Activated CD8-positive, alpha-beta T cell treated with anti-CD3 and anti-CD28 coated beads for 36 hours (primary cell): ENCODE measurements at regions of chr5 and their contacts with region 1.

Region 1: DNA sequence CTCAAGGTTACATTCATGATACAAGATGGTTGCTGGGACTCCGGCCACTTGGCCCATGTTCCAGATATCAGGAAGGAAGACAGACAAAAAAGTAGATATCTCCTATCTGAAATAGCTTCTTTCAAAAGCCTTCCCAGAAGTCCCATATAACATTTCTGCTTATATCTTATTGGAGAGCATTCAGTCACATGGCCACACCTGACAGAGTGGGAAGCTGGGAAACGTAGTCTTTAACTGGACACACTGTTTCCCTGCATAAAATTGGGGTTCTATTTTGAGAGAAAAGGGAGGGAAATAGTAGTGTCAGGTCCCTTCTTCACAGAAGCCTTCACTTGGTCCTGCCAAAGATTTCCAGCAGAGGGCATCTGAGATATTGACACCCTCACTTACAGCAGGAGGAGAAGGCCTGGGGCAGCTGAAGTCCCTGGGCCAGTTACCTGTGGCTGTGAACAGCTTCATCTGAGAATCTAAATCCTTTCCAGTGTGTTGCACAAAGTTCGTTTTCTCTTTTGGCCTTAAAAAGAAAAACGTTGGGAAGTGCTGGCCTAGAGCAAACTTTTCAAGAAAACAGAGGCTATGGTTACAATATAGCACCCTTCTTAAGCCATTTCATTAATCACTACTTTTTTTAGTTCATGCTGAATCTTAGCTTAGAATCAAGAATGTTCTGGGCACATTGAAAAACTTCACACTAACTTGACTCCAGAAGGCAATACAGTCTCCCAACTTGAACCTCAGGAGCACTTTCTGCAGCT is 33.5 kb downstream of the SPEF2 start:
- DNase-seq: peak; percentile 78
- ATAC-seq: peak; percentile 98
- H3K4me3 Mint-ChIP-seq: no peak overlapping the region
- H3K27ac Mint-ChIP-seq: no peak overlapping the region
- H3K4me1 Mint-ChIP-seq: peaks cover 12% of the 10 kb centered on the region
- H3K27me3 Mint-ChIP-seq: no peaks in the 10 kb centered on the region
- CTCF ChIP-seq: peak; percentile 46

Region 2: GRCh38 chr5:35617435-35618303 is 33.5 kb before region 1 on chr5 and contains the start of gene SPEF2:
- CTCF ChIA-PET with region 1: interaction called, 25 read pairs
- POLR2A ChIA-PET with region 1: no interaction called
- intact Hi-C with region 1: no loop called
- DNase-seq: peak; percentile 89
- ATAC-seq: peak; percentile 92
- H3K4me3 Mint-ChIP-seq: peak within 1 kb of the TSS; percentile 84
- H3K27ac Mint-ChIP-seq: peak within 1 kb of the TSS; percentile 97
- H3K4me1 Mint-ChIP-seq: peaks cover 25% of the 10 kb centered on the region
- H3K27me3 Mint-ChIP-seq: no peaks in the 10 kb centered on the region
- CTCF ChIP-seq: peak; percentile 84
- total RNA-seq, gene SPEF2: 8.4 to 9.9 TPM

Region 3: DNA sequence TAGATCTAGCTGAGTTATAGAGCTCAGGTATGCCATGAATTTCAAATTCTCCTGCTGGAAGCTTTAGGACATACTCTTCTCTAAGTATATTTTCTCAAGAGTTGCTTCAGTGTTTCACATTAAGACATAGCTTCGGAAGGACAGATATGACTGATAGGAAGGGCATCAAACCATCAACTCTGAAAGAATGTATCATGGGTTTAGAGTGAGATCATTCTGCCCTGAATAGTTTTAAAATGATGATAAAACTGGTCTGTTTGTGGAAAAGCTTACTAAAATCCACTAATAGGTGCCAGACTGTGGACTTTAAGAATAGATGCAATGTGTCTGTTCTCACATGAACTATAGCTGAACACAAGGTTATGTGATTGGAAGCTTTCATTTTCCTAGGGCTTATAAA is 25.1 kb before region 1 on chr5:
- CTCF ChIA-PET with region 1: interaction called, 28 read pairs
- POLR2A ChIA-PET with region 1: no interaction called
- intact Hi-C with region 1: no loop called
- DNase-seq: no peak
- ATAC-seq: peak; percentile 74
- H3K4me3 Mint-ChIP-seq: no peak overlapping the region
- H3K27ac Mint-ChIP-seq: peak overlapping the region; percentile 40
- H3K4me1 Mint-ChIP-seq: peaks cover 34% of the 10 kb centered on the region
- H3K27me3 Mint-ChIP-seq: no peaks in the 10 kb centered on the region
- CTCF ChIP-seq: no peak

Region 4: GRCh38 chr5:35665096-35665495 is 13.9 kb after region 1 on chr5:
- CTCF ChIA-PET with region 1: interaction called, 34 read pairs
- POLR2A ChIA-PET with region 1: interaction called, 6 read pairs
- intact Hi-C with region 1: no loop called
- DNase-seq: no peak
- ATAC-seq: no peak
- H3K4me3 Mint-ChIP-seq: no peak overlapping the region
- H3K27ac Mint-ChIP-seq: peak overlapping the region; percentile 8
- H3K4me1 Mint-ChIP-seq: peaks cover 43% of the 10 kb centered on the region
- H3K27me3 Mint-ChIP-seq: no peaks in the 10 kb centered on the region
- CTCF ChIP-seq: no peak

Region 5: DNA sequence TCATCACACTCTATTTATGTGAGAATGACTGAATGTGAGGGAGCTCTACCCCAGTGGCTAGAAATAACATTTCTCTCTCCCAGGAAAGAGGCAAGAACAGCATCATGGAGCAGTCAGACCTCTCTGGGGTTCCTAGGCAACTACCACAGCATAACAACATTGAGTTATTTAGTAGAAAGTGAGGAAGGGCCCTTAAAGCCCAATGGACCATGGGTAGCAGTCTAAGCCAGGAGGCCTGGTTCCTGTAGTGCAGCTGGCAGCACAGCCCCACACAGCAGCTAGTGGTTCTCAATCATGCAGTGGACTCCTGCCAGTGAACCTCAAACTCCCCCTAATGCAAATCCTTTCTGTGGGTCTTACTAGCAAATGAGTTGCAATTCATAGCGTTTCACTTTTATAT is 21.8 kb after region 1 on chr5:
- CTCF ChIA-PET with region 1: interaction called, 11 read pairs
- POLR2A ChIA-PET with region 1: no interaction called
- intact Hi-C with region 1: no loop called
- DNase-seq: peak; percentile 71
- ATAC-seq: peak; percentile 90
- H3K4me3 Mint-ChIP-seq: no peak overlapping the region
- H3K27ac Mint-ChIP-seq: peak overlapping the region; percentile 84
- H3K4me1 Mint-ChIP-seq: peaks cover 59% of the 10 kb centered on the region
- H3K27me3 Mint-ChIP-seq: no peaks in the 10 kb centered on the region
- CTCF ChIP-seq: no peak

Region 6: GRCh38 chr5:35777358-35778087 is 126.3 kb after region 1 on chr5:
- CTCF ChIA-PET with region 1: interaction called, 10 read pairs
- POLR2A ChIA-PET with region 1: no interaction called
- intact Hi-C with region 1: loop called (anchors 5 kb)
- DNase-seq: peak; percentile 88
- ATAC-seq: peak; percentile 48
- H3K4me3 Mint-ChIP-seq: peak overlapping the region; percentile 3
- H3K27ac Mint-ChIP-seq: peak overlapping the region; percentile 91
- H3K4me1 Mint-ChIP-seq: peaks cover 67% of the 10 kb centered on the region
- H3K27me3 Mint-ChIP-seq: no peaks in the 10 kb centered on the region
- CTCF ChIP-seq: peak; percentile 94

Region 7: DNA sequence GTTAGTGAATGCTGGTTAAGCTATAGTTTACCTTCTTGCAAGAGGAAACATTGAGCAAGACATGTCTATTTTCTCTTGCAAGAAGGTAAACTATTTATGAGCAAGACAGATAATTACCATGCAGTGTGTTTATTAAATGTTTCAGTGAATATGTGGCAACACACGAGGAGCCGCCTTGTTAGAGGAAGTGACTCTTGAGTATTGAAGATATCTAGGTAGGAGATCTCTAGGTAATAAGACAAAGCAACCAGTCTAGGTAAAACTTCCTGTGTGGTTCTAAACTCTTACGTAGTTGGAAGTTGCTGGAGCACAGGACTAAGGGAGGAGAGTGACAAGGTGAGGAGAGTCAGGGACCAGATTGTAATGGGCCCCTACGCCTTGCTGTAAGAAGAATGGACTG is 517.6 kb after region 1 on chr5:
- CTCF ChIA-PET with region 1: no interaction called
- POLR2A ChIA-PET with region 1: no interaction called
- intact Hi-C with region 1: no loop called
- DNase-seq: no peak
- ATAC-seq: no peak
- H3K4me3 Mint-ChIP-seq: no peak overlapping the region
- H3K27ac Mint-ChIP-seq: no peak overlapping the region
- H3K4me1 Mint-ChIP-seq: peaks cover 3% of the 10 kb centered on the region
- H3K27me3 Mint-ChIP-seq: no peaks in the 10 kb centered on the region
- CTCF ChIP-seq: no peak